ENCODE measurements at regions of chr2 and their contacts with region 1.

Region 1: GRCh38 chr2:69436938-69437750 is at the start of gene NFU1:
- DNase-seq: peak; percentile 90
- H3K4me3 Mint-ChIP-seq: peak within 1 kb of the TSS; percentile 90
- H3K27ac Mint-ChIP-seq: peak within 1 kb of the TSS; percentile 94
- H3K4me1 Mint-ChIP-seq: peaks cover 15% of the 10 kb centered on the region
- H3K27me3 Mint-ChIP-seq: no peaks in the 10 kb centered on the region
- CTCF ChIP-seq: no peak
- total RNA-seq, gene NFU1: 21.7 and 23.4 TPM in 2 replicates

Region 2: DNA sequence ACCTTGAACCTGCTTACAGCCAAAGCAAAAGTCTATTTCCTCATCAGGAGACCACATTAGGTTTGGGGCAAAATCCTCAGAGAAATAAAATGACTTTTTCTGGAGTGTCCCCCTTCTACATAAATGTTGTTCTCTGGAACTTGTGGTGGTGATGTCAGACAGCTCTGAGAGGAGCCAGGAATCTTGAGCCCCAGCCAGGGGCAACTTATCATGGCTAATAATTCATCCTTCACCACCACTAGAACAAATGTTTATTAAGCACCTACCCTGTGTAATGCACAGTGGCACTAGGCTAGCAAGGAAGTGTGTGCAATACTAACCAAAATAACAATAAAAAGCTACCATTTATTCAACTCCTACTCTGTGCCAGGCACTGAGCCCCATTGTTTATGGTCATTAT is 556.9 kb before region 1 on chr2:
- CTCF ChIA-PET with region 1: no interaction called
- intact Hi-C with region 1: no loop called
- DNase-seq: no peak
- H3K4me3 Mint-ChIP-seq: no peak overlapping the region
- H3K27ac Mint-ChIP-seq: no peak overlapping the region
- H3K4me1 Mint-ChIP-seq: no peaks in the 10 kb centered on the region
- H3K27me3 Mint-ChIP-seq: peaks cover 83% of the 10 kb centered on the region
- CTCF ChIP-seq: no peak

Region 3: GRCh38 chr2:69483024-69483423 is 45.9 kb after region 1 on chr2:
- CTCF ChIA-PET with region 1: interaction called, 11 read pairs
- intact Hi-C with region 1: no loop called
- DNase-seq: no peak
- H3K4me3 Mint-ChIP-seq: peak overlapping the region; percentile 45
- H3K27ac Mint-ChIP-seq: peak overlapping the region; percentile 66
- H3K4me1 Mint-ChIP-seq: peaks cover 31% of the 10 kb centered on the region
- H3K27me3 Mint-ChIP-seq: no peaks in the 10 kb centered on the region
- CTCF ChIP-seq: no peak

Region 4: DNA sequence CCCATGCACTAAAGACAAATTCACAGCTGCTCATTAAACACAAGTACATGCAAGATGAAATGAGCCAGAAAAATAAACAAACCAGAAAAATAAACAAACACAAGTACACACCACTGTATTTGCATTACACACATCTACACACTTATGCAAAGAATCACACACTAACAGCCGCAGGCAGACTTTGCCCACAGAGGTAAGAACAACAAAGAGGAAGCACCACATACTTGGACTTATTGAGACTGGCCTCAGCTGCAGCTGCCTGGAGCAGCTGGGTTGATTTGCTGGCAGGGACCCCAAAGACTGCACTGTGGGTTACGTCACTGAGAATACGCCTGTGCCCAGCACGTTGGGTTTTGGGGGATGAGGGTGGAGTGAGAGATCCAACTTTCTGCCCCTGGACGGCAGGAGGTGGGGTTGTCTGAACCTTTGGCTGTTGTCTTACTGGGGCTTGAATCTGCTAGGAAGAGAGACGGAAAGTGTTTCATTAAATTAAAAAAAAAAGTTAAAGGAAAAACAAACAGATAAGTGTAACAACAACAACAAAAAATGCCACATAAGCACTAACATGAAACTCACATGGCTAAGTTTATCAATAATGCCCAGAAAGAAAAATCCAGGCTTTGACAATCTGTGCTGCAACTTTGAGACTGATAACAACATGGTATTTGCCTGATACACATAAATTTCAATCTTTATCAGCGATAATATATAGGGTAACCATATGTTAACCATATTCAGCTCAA is 72.0 kb after region 1 on chr2:
- CTCF ChIA-PET with region 1: no interaction called
- intact Hi-C with region 1: loop called (anchors 2 kb)
- DNase-seq: no peak
- H3K4me3 Mint-ChIP-seq: peak overlapping the region; percentile 15
- H3K27ac Mint-ChIP-seq: peak overlapping the region; percentile 79
- H3K4me1 Mint-ChIP-seq: peaks cover 27% of the 10 kb centered on the region
- H3K27me3 Mint-ChIP-seq: no peaks in the 10 kb centered on the region
- CTCF ChIP-seq: no peak